ENCODE measurements at regions of chr9 and their contacts with region 1.

Region 1: DNA sequence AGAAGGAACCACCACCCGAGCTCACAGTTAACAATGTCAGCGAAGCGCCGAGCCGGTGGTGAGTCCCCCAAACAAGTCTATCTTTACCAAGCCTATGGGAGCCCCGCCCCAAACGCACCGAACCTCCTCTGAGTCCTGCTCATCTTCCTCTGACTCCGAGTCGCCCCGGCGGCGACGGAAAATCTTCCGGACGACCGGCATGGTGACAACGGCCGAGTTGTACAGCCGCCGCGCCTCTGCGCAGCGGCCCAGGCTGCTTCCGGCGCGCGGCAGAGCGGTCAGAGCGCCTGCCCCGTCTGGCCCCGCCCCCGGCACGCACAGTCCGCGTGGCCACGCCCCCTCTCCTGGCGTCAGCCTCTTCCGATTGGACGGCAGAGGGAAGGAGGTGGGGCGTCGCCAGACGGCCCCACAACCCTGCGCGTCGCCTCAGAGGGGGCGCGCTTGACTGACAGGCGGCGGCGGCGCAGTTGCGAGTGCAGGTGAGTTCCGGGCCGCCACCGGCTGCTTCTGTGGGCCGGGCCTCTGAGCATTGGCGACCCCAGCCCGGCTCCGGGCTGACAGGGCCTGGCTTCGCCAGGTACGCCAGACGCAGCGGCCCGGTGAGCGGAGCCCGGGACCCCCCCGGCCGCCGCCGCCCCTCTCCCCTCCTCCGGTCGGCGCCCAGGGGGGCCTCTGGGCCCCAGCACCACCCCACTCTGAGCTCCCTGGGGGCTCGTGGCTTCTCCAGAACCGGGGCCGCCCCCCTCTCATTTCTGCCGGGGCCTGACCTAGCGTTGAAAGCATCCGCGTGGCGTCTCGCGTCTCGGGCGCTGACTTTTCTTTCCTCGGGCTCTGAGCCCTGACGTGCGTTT is at the starts of genes C9orf78 and USP20:
- DNase-seq: peak; percentile 95
- H3K4me3 Mint-ChIP-seq: peak within 1 kb of the TSS; percentile 98
- H3K27ac Mint-ChIP-seq: peak within 1 kb of the TSS; percentile 98
- H3K4me1 Mint-ChIP-seq: peaks cover 46% of the 10 kb centered on the region
- H3K27me3 Mint-ChIP-seq: no peaks in the 10 kb centered on the region
- total RNA-seq, gene C9orf78: 54.4 and 59.6 TPM in 2 replicates
- total RNA-seq, gene USP20: 45.6 and 52.3 TPM in 2 replicates

Region 2: GRCh38 chr9:129802851-129803675 is 32.2 kb before region 1 on chr9 and contains the start of gene TOR1B:
- intact Hi-C with region 1: loop called (anchors 1 kb)
- DNase-seq: peak; percentile 92
- H3K4me3 Mint-ChIP-seq: peak within 1 kb of the TSS; percentile 88
- H3K27ac Mint-ChIP-seq: peak within 1 kb of the TSS; percentile 85
- H3K4me1 Mint-ChIP-seq: peaks cover 21% of the 10 kb centered on the region
- H3K27me3 Mint-ChIP-seq: no peaks in the 10 kb centered on the region
- total RNA-seq, gene TOR1B: 23.9 and 25.2 TPM in 2 replicates

Region 3: DNA sequence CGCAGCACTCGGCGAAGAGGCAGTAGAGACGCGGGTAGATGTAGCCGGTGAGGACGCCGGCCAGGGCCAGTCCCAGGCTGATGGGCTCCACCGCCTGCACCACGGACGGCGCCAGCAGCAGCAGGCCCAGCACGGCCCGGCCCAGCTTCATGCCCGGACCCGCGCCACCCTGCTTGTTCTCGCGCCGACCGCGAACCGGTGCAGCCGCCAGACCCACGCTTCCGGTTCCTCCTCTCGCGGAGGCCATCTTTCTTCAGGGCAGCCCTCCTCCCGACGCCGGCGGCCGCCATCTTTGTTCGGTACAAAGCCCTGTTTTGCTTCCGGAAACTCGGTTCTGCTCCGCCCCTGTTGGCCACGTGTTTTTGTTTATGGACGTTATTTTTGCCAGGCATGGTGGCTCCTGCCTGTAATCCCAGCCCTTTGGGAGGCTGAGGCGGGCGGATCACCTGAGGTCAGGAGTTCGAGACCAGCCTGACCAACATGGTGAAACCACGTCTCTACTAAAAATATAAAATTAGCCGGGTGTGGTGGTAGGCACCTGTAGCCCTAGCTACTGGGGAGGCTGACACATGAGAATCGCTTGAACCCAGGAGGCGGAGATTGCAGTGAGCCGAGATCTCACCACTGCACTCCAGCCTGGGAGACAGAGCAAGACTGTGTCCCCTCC is 11.2 kb before region 1 on chr9 and contains the start of gene TOR1A:
- intact Hi-C with region 1: loop called (anchors 1 kb)
- DNase-seq: peak; percentile 91
- H3K4me3 Mint-ChIP-seq: peak within 1 kb of the TSS; percentile 83
- H3K27ac Mint-ChIP-seq: peak within 1 kb of the TSS; percentile 57
- H3K4me1 Mint-ChIP-seq: peaks cover 9% of the 10 kb centered on the region
- H3K27me3 Mint-ChIP-seq: no peaks in the 10 kb centered on the region
- total RNA-seq, gene TOR1A: 52.5 and 55.8 TPM in 2 replicates

Region 4: GRCh38 chr9:129863059-129863690 is 27.9 kb after region 1 on chr9:
- intact Hi-C with region 1: loop called (anchors 1 kb)
- DNase-seq: peak; percentile 79
- H3K4me3 Mint-ChIP-seq: peak overlapping the region; percentile 66
- H3K27ac Mint-ChIP-seq: peak overlapping the region; percentile 91
- H3K4me1 Mint-ChIP-seq: peaks cover 67% of the 10 kb centered on the region
- H3K27me3 Mint-ChIP-seq: no peaks in the 10 kb centered on the region